ENCODE measurements at regions of chr9 and their contacts with region 1.

Region 1: GRCh38 chr9:112844771-112845542 is 45.7 kb downstream of the SLC46A2 start:
- DNase-seq: peak; percentile 78 to 86
- ATAC-seq: peak; percentile 76 to 95 (median 87)
- H3K4me3 ChIP-seq: peak overlapping the region; percentile 37
- H3K27ac ChIP-seq: no peak overlapping the region
- H3K4me1 ChIP-seq: no peaks in the 10 kb centered on the region
- H3K27me3 ChIP-seq: no peaks in the 10 kb centered on the region
- CTCF ChIP-seq: peak; percentile 98

Region 2: DNA sequence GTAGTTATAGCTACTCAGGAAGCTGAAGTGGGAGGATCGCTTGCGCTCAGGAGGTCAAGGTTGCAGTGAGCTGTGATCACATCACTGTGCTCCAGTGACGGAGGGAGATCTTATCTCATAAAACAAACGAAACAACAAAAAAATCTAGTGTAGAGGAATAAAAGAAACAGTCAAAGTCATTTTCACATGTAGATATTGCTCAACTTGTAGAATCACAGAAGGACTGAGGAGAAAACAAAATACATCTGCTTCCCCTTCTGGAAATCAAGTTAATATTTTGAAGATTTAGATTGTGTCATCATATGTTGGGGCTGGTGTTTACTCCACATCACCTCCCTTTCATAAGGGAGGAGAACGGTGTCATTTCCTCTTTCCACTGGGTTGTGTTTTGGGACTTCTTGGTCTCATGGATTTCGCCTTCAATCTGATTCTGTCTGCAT is 53.9 kb after region 1 on chr9:
- intact Hi-C with region 1: loop called in 1 of 2 experiments (anchors 1 kb)
- DNase-seq: no peak
- ATAC-seq: no peak
- H3K4me3 ChIP-seq: no peak overlapping the region
- H3K27ac ChIP-seq: no peak overlapping the region
- H3K4me1 ChIP-seq: no peaks in the 10 kb centered on the region
- H3K27me3 ChIP-seq: no peaks in the 10 kb centered on the region
- CTCF ChIP-seq: no peak

Measured in psoas muscle (tissue), 8 donors.